ENCODE measurements at regions of chr5 and their contacts with region 1.

Region 1: GRCh38 chr5:102782311-102782770 is 27.2 kb downstream of the PAM start:
- DNase-seq: no peak
- H3K4me3 ChIP-seq: no peak overlapping the region
- H3K27ac ChIP-seq: no peak overlapping the region
- H3K4me1 ChIP-seq: no peaks in the 10 kb centered on the region
- H3K27me3 ChIP-seq: no peaks in the 10 kb centered on the region
- CTCF ChIP-seq: no peak

Region 2: DNA sequence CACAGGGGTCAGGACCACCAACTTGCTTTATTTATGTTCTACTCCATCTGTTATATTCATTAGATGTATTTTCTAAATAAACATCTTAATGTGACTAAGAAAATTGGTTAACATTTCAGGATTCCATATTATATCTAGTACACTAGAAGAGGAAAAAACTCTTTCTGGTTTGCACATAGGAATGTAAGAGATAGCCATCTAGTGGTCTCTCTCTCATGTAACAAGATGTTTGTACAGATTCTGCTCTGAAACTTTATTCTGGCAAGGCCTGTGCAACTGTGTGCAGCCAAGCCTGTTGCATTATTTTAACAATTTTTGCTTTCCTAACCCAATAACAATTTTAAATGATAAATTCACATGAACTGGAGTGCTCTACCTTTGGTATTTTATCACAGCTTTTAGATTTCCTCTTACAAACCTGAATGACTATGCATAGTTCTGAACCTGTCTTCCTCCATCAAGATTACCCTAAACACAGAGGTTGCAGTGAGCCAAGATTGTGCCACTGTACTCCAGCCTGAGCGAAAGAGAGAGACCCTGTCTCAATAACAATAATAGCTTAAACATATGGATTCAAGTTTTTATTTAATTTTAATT is 189.5 kb after region 1 on chr5:
- intact Hi-C with region 1: loop called (anchors 5 kb)
- DNase-seq: no peak
- H3K4me3 ChIP-seq: no peak overlapping the region
- H3K27ac ChIP-seq: no peak overlapping the region
- H3K4me1 ChIP-seq: no peaks in the 10 kb centered on the region
- H3K27me3 ChIP-seq: no peaks in the 10 kb centered on the region
- CTCF ChIP-seq: no peak

Region 3: DNA sequence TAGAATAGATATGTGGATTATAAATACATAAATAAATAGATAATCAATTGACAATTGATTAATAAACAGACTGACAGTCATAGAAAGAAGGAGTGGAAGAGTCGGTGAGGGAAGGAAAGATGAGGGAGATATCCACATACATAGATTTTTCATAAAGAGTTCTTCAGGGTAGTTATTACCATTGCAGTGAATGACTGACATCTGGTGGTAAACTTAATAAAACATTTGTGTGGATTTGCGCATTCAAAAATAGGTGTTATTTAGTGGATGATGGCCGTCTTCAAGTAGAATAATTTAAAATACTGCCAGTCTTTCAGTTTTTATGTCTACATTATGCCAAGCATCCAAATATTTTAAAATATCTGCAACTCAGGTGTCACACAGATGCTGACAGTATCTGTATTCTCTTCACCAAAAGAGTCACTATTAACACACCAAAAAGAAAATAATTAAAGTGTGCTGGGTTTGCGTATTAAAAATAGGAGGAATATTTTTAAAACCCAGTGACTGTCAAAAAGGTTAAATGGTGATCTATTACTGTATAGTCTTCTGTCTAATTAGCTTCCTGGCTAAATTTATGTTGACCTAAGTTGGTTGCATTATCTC is 258.8 kb after region 1 on chr5:
- intact Hi-C with region 1: loop called (anchors 5 kb)
- DNase-seq: no peak
- H3K4me3 ChIP-seq: no peak overlapping the region
- H3K27ac ChIP-seq: no peak overlapping the region
- H3K4me1 ChIP-seq: no peaks in the 10 kb centered on the region
- H3K27me3 ChIP-seq: no peaks in the 10 kb centered on the region
- CTCF ChIP-seq: peak; percentile 34

Region 4: GRCh38 chr5:103139264-103139865 is 357.0 kb after region 1 on chr5:
- intact Hi-C with region 1: loop called (anchors 10 kb)
- DNase-seq: peak; percentile 87
- H3K4me3 ChIP-seq: no peak overlapping the region
- H3K27ac ChIP-seq: no peak overlapping the region
- H3K4me1 ChIP-seq: no peaks in the 10 kb centered on the region
- H3K27me3 ChIP-seq: no peaks in the 10 kb centered on the region
- CTCF ChIP-seq: peak; percentile 91